HepG2 (cell line): ENCODE measurements at regions of chr6 and their contacts with region 1.

Region 1: GRCh38 chr6:145214570-145214969 is 520.8 kb downstream of the EPM2A start:
- DNase-seq: peak; percentile 47
- ATAC-seq: no peak
- H3K4me3 ChIP-seq: no peak overlapping the region
- H3K27ac ChIP-seq: no peak overlapping the region
- H3K4me1 ChIP-seq: no peaks in the 10 kb centered on the region
- H3K27me3 ChIP-seq: no peaks in the 10 kb centered on the region
- CTCF ChIP-seq: peak; percentile 46
- EP300 ChIP-seq: no peak
- POLR2A ChIP-seq: no peak
- RAD21 ChIP-seq: no peak

Region 2: DNA sequence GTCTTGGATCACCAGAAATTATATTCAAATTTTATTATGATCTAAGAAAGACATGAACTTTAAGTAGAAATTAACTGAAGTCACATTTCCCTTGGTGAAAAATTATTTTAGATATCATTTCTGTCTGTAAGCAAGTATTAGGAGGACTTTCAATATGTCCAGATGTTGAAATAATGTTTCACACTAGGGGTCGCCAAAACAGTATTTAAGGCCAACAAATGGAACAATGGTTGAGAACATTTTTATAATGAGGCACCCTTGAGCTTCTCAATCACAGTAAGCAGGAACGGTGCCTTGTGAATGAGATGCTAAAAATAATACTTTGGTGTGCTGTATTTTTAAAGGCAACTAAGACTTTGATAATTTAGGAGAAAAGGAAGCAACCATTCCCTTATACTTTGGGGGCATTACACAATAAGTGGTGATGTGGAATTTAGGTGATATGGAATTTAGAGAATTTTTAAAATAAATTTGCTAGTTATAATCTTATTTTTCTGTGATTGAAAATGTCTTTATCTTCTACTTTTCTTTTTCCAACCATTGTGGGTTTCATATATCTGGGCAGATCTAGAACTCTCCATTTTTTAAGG is 1109.6 kb before region 1 on chr6:
- CTCF ChIA-PET with region 1: no interaction called
- POLR2A ChIA-PET with region 1: no interaction called
- in situ Hi-C with region 1: loop called (anchors 25 kb)
- intact Hi-C with region 1: loop called (anchors 5 kb)
- DNase-seq: peak; percentile 74
- ATAC-seq: peak; percentile 86
- H3K4me3 ChIP-seq: no peak overlapping the region
- H3K27ac ChIP-seq: no peak overlapping the region
- H3K4me1 ChIP-seq: no peaks in the 10 kb centered on the region
- H3K27me3 ChIP-seq: no peaks in the 10 kb centered on the region
- CTCF ChIP-seq: peak; percentile 84
- EP300 ChIP-seq: no peak
- POLR2A ChIP-seq: no peak
- RAD21 ChIP-seq: peak; percentile 71

Region 3: DNA sequence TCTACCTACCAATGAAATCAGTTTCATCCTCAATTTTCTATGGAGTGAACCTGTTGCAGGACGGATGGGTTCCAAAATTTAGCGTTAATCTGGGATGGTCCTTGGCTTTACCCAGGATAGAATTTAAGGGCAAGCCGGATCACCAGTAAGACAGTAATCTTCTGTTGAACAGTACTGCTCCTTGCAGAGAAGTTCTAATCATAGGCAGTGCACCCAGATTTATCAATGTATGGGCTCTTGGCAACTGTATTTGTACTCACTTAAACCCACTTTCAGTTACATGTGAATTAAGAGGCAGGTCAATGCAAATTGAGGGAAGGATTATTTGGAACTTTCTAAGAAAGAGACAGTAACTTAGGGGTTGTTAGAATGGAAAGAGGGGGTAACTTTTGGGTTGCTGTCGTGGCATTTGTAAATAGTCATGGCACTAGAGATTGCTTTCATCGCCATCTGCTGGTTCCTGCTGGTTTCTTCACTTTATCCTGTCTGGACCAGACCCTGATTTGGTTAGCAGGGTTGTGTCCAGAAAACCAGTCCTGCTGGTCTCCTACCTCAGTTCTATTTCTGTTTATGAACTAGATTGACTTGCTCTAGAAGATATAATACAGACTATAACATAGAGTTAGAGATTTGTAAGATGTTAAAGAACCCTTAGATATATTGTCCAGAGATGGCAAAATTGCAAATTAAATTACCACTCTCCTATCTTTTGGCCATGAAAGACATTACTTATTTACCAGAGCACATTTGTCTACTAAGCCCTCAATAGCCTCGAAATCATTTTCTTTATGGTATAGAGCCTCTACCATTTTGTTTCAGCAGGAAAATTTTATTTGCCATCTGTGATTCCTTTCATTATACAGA is 283.2 kb before region 1 on chr6:
- CTCF ChIA-PET with region 1: no interaction called
- POLR2A ChIA-PET with region 1: no interaction called
- in situ Hi-C with region 1: no loop called
- intact Hi-C with region 1: loop called (anchors 1 kb)
- DNase-seq: peak; percentile 27
- ATAC-seq: peak; percentile 93
- H3K4me3 ChIP-seq: no peak overlapping the region
- H3K27ac ChIP-seq: no peak overlapping the region
- H3K4me1 ChIP-seq: no peaks in the 10 kb centered on the region
- H3K27me3 ChIP-seq: peaks cover 0 to 6% of the 10 kb centered on the region in 2 experiments; a peak in 1 of 5 replicates
- CTCF ChIP-seq: peak; percentile 81
- EP300 ChIP-seq: no peak
- POLR2A ChIP-seq: no peak
- RAD21 ChIP-seq: peak; percentile 69

Region 4: DNA sequence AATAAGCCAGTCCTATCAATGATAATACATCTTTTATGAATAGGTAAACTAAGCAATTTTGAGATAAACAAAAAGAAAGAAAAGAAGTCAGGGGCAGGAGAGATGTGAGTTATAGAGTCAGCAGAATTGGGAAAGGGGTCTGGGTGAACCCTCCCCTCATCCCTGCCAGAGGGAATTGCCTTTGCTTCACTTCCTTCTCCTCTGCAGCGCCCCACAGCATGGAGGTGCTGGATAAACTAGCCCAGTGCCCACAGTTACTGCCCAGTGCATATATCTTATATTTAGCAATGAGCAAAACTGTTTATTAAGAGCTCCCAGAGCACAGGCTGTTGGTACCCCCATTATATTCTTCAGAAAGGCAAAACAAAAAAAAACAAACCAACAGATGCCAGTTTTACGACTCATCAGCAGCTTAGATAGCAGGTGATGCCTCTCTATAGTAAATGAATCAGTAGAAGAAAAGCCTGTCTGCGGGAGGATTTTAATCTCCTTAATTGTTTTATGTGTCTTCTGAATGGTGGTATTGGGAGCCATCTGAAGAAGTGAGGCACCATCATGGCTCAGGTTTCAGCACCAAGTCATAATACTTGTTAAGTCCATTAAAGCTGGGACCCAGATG is 101.5 kb after region 1 on chr6:
- CTCF ChIA-PET with region 1: no interaction called
- POLR2A ChIA-PET with region 1: no interaction called
- in situ Hi-C with region 1: no loop called
- intact Hi-C with region 1: loop called (anchors 5 kb)
- DNase-seq: no peak
- ATAC-seq: no peak
- H3K4me3 ChIP-seq: no peak overlapping the region
- H3K27ac ChIP-seq: no peak overlapping the region
- H3K4me1 ChIP-seq: no peaks in the 10 kb centered on the region
- H3K27me3 ChIP-seq: no peaks in the 10 kb centered on the region
- CTCF ChIP-seq: no peak
- EP300 ChIP-seq: no peak
- POLR2A ChIP-seq: no peak
- RAD21 ChIP-seq: no peak

Region 5: GRCh38 chr6:145349950-145350510 is 135.5 kb after region 1 on chr6:
- CTCF ChIA-PET with region 1: no interaction called
- POLR2A ChIA-PET with region 1: no interaction called
- in situ Hi-C with region 1: no loop called
- intact Hi-C with region 1: no loop called
- DNase-seq: no peak
- ATAC-seq: no peak
- H3K4me3 ChIP-seq: no peak overlapping the region
- H3K27ac ChIP-seq: no peak overlapping the region
- H3K4me1 ChIP-seq: no peaks in the 10 kb centered on the region
- H3K27me3 ChIP-seq: no peaks in the 10 kb centered on the region; a peak in 2 of 5 replicates
- CTCF ChIP-seq: no peak
- EP300 ChIP-seq: no peak
- POLR2A ChIP-seq: no peak
- RAD21 ChIP-seq: no peak

Region 6: GRCh38 chr6:145633981-145634627 is 419.5 kb after region 1 on chr6:
- CTCF ChIA-PET with region 1: no interaction called
- POLR2A ChIA-PET with region 1: no interaction called
- in situ Hi-C with region 1: no loop called
- intact Hi-C with region 1: loop called (anchors 2 kb)
- DNase-seq: peak; percentile 75
- ATAC-seq: peak; percentile 98
- H3K4me3 ChIP-seq: no peak overlapping the region
- H3K27ac ChIP-seq: no peak overlapping the region
- H3K4me1 ChIP-seq: no peaks in the 10 kb centered on the region
- H3K27me3 ChIP-seq: no peaks in the 10 kb centered on the region
- CTCF ChIP-seq: peak; percentile 94
- EP300 ChIP-seq: no peak
- POLR2A ChIP-seq: no peak
- RAD21 ChIP-seq: peak; percentile 76